ENCODE measurements at regions of chr5 and their contacts with region 1.

Region 1: GRCh38 chr5:172748341-172748843 is 22.6 kb downstream of the DUSP1 start:
- DNase-seq: peak in 1 of 2 donors; percentile 96
- H3K4me3 ChIP-seq: peak overlapping the region in 1 of 2 donors; percentile 6
- H3K27ac ChIP-seq: peak overlapping the region; percentile 81 to 97
- H3K4me1 ChIP-seq: peaks cover 18 to 44% of the 10 kb centered on the region in 2 donors
- H3K27me3 ChIP-seq: no peaks in the 10 kb centered on the region
- CTCF ChIP-seq: no peak

Region 2: GRCh38 chr5:171797543-171797942 is 950.8 kb before region 1 on chr5:
- intact Hi-C with region 1: no loop called
- DNase-seq: no peak
- H3K4me3 ChIP-seq: no peak overlapping the region
- H3K27ac ChIP-seq: no peak overlapping the region
- H3K4me1 ChIP-seq: no peaks in the 10 kb centered on the region
- H3K27me3 ChIP-seq: no peaks in the 10 kb centered on the region
- CTCF ChIP-seq: no peak

Region 3: DNA sequence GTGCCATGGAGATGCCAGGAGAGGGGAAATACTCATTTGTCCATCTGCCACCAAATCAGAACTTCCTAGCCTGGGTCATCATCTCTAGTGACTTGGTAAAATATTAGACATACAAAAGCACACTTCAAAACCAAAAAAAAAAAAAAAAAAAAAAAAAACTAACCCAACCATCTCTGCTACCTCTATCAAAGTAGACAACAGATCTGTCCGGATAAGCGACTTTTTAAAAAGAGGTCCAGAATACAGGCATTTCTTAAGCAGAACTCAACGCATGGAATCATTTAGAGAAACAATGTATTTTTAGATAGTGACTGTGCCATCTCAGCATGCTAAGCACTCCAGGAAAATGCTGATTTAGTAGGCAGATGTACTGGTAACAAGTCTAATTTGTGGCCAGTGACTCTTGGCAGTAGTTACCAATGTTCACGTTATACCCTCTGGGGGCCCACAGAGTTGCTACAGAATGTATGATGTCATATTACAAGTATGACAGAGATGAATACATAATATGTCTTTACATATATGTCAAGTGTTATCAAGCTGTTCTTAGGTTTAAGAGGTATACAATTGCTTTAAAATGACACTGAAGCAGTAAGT is 855.0 kb before region 1 on chr5:
- intact Hi-C with region 1: no loop called
- DNase-seq: no peak
- H3K4me3 ChIP-seq: no peak overlapping the region
- H3K27ac ChIP-seq: no peak overlapping the region
- H3K4me1 ChIP-seq: no peaks in the 10 kb centered on the region
- H3K27me3 ChIP-seq: no peaks in the 10 kb centered on the region
- CTCF ChIP-seq: no peak

Region 4: GRCh38 chr5:172255444-172255843 is 492.9 kb before region 1 on chr5:
- intact Hi-C with region 1: no loop called
- DNase-seq: no peak
- H3K4me3 ChIP-seq: no peak overlapping the region
- H3K27ac ChIP-seq: no peak overlapping the region
- H3K4me1 ChIP-seq: no peaks in the 10 kb centered on the region
- H3K27me3 ChIP-seq: no peaks in the 10 kb centered on the region
- CTCF ChIP-seq: no peak

Region 5: DNA sequence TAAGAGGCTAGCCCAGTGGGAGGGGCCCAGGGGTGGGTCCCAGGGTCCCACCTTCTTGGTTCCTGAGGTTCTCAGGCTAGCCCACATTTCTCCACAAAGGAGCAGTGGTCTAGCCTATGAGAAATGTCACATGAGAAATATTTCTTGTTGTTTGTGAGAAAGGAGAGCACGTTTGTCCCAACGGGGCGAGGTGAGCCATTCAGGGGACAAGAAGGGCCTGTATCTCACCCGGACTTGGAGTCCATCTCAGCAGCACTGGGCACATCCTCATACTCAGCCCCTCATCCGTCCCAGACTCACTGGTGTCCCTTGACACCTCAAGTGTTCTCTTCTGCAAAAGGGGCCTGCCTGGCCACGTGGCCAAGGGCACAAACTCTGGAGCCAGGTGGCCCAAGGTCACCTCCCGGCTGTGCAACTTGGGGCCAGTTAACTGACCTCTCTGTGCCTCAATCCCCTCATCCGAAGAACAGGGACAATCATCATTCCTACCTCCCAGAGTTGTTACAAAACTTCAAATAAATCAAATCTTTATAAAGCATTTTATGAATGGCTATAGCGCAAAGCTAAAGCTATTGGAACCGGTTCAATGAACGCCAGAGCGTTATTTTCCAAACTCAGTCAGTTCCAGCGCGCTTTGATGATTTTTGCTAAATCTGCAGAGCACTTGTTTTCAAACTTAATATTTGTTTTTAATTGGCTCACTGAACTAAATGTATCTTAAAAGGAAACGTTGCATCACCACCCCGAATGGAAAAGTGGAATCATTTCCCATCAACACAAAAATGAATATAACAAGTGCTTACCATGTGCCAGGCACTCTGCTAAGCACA is 26.9 kb before region 1 on chr5:
- intact Hi-C with region 1: loop called (anchors 2 kb)
- DNase-seq: peak in 1 of 2 donors; percentile 86
- H3K4me3 ChIP-seq: peak overlapping the region; percentile 15 to 18
- H3K27ac ChIP-seq: peak overlapping the region; percentile 54 to 68
- H3K4me1 ChIP-seq: peaks cover 4 to 23% of the 10 kb centered on the region in 2 donors
- H3K27me3 ChIP-seq: no peaks in the 10 kb centered on the region
- CTCF ChIP-seq: no peak

Region 6: GRCh38 chr5:172733131-172733973 is 15.0 kb before region 1 on chr5:
- intact Hi-C with region 1: loop called (anchors 1 kb)
- DNase-seq: peak; percentile 71 to 97
- H3K4me3 ChIP-seq: peak overlapping the region in 1 of 2 donors; percentile 34
- H3K27ac ChIP-seq: peak overlapping the region; percentile 96 to 97
- H3K4me1 ChIP-seq: peaks cover 23 to 37% of the 10 kb centered on the region in 2 donors
- H3K27me3 ChIP-seq: no peaks in the 10 kb centered on the region
- CTCF ChIP-seq: no peak

Region 7: DNA sequence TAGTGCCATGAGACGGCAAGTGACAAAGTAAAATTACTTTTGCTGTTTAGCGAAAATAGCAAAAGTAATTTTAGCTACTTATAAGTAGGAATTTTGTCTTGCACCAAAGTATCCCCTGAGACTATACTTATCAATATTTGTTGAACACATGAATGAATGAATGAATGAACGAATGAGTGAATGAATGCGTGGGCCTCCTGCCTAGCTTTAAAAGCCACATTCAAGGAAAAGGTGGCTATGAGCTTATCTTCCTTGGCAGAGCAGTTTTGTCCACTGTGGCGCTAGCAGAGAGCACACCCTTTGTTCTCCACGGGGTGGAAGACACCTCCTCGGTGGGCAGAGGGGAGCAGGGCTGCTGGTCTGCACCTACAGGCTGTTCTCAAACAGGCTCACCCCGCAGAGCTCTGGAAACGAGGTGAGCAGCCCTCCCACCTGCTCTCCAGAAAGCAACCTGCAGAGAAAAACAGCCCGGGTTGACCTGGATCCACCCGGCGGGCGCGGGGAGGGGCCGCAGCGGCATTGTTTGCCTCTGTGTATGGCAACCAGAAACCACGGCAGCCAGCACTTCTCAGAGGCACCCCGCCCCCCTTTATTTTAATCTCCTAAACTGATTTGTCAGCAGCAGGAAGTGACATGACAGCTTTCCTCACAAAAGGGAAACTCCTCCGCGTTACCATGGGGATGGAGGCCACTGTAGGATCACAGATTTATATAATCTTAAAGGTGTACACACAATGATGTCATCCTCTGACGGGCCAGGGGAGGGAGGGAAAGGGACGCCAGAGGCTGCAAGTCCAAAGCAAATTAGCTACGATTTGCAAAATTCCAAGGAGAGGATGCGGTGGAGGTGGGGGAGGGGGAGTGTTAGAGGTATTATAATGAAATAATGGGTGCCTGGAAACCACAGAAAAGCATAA is 16.7 kb after region 1 on chr5:
- intact Hi-C with region 1: loop called (anchors 1 kb)
- DNase-seq: peak; percentile 98 to 100
- H3K4me3 ChIP-seq: peak overlapping the region; percentile 88 to 89
- H3K27ac ChIP-seq: peak overlapping the region; percentile 97 to 100
- H3K4me1 ChIP-seq: peaks cover 3 to 7% of the 10 kb centered on the region in 2 donors
- H3K27me3 ChIP-seq: no peaks in the 10 kb centered on the region
- CTCF ChIP-seq: no peak

Region 8: DNA sequence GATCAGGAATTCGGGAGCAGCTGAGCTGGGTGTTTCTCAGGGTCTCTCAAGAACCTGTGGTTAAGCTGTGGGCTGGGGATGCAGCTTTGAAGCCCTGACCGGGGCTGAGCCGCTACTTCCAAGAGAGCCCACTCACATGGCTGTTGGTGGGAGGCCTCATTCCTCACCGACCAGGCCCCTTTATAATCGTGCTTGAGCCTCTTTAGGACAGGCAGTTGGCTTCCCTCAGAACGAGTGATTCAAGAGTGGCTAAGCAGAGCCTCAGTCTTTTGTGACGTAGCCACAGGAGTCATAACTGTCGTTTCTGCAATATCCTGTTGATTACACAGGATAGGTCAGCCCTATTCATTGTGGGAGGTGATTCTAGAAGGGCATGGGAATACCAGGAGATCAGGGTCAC is 82.5 kb after region 1 on chr5:
- intact Hi-C with region 1: no loop called
- DNase-seq: no peak
- H3K4me3 ChIP-seq: no peak overlapping the region
- H3K27ac ChIP-seq: peak overlapping the region in 1 of 2 donors; percentile 29
- H3K4me1 ChIP-seq: peaks cover 0 to 10% of the 10 kb centered on the region in 2 donors
- H3K27me3 ChIP-seq: no peaks in the 10 kb centered on the region
- CTCF ChIP-seq: no peak

Measured in ascending aorta (tissue), 2 donors.